CD4-positive, alpha-beta memory T cell (primary cell): ENCODE measurements at regions of chr17 and their contacts with region 1.

Region 1: GRCh38 chr17:51435641-51436091 is 175.3 kb downstream of the UTP18 start:
- DNase-seq: peak; percentile 29 to 74 (median 40)
- H3K4me3 ChIP-seq: peak overlapping the region in 1 of 2 donors; percentile 20
- H3K4me3 Mint-ChIP-seq: peak overlapping the region; percentile 33 to 87 (median 75)
- H3K27ac ChIP-seq: peak overlapping the region; percentile 15
- H3K27ac Mint-ChIP-seq: peak overlapping the region; percentile 54 to 93 (median 74)
- H3K4me1 ChIP-seq: peaks cover 60% of the 10 kb centered on the region
- H3K4me1 Mint-ChIP-seq: peaks cover 27 to 67% (median 45%) of the 10 kb centered on the region in 4 donors
- H3K27me3 ChIP-seq: no peaks in the 10 kb centered on the region
- H3K27me3 Mint-ChIP-seq: no peaks in the 10 kb centered on the region

Region 2: DNA sequence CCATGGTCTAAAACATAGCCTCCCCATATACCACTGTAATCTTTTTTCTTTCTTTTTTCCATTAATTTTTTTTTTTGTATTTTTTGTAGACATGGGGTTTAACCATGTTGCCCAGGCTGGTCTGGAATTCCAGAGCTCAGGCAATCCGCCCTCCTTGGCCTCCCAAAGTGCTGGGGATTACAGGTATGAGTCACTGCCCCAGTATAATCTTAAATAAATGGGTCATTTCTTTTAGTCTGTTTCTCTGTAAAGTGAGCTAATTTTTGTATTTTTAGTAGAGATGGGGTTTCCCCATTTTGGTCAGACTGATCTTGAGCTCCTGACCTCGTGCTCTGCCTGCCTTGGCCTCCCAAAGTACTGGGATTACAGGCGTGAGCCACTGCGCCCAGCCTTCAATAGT is 288.0 kb before region 1 on chr17:
- CTCF ChIA-PET with region 1: no interaction called
- POLR2A ChIA-PET with region 1: no interaction called
- intact Hi-C with region 1: no loop called
- DNase-seq: no peak
- H3K4me3 ChIP-seq: no peak overlapping the region
- H3K4me3 Mint-ChIP-seq: no peak overlapping the region
- H3K27ac ChIP-seq: no peak overlapping the region
- H3K27ac Mint-ChIP-seq: peak overlapping the region in 1 of 7 donors; percentile 23
- H3K4me1 ChIP-seq: peaks cover 3% of the 10 kb centered on the region
- H3K4me1 Mint-ChIP-seq: peaks cover 0 to 2% (median 0%) of the 10 kb centered on the region in 4 donors
- H3K27me3 ChIP-seq: no peaks in the 10 kb centered on the region
- H3K27me3 Mint-ChIP-seq: peaks cover 0 to 1% of the 10 kb centered on the region in 2 donors

Region 3: DNA sequence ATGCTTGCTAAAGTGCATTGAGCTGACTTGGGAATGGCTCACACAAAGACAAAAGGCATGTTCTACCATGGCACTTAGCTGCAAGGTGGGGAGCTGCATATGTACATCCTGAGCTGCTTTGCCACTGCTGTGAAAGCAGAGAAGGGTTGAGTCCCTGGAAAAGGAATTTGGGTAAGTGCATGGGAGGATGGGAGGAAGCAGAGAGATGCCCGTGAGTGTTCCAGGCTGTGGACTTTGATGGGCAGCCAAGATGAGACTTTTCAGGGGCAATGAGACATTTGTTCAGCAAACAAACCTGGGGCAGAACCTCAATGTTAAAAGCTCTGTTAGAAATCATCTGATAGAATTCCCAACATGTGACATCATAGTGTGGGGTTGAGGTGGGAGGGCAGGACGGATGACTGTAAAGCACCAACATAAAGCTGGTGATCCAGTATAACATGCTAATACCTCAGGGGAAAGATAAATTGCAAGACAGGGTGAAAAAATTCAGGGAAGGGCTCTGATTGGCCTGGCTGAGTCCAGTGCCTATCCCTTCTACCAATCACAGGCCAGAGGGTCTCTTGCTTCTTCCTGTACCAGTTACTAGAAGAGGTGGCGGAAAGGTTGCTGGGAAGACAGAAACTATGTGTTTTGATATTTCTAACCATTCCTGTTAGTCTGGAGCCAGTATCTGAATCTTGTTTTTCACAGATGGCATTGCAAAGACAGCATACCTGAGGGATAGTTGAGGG is 12.1 kb before region 1 on chr17:
- CTCF ChIA-PET with region 1: interaction called, 13 read pairs
- POLR2A ChIA-PET with region 1: interaction called, 3 read pairs
- intact Hi-C with region 1: no loop called
- DNase-seq: no peak
- H3K4me3 ChIP-seq: no peak overlapping the region
- H3K4me3 Mint-ChIP-seq: no peak overlapping the region
- H3K27ac ChIP-seq: no peak overlapping the region
- H3K27ac Mint-ChIP-seq: peak overlapping the region in 2 of 7 donors; percentile 9 to 36
- H3K4me1 ChIP-seq: peaks cover 26% of the 10 kb centered on the region
- H3K4me1 Mint-ChIP-seq: peaks cover 26 to 31% (median 30%) of the 10 kb centered on the region in 4 donors
- H3K27me3 ChIP-seq: no peaks in the 10 kb centered on the region
- H3K27me3 Mint-ChIP-seq: no peaks in the 10 kb centered on the region

Region 4: GRCh38 chr17:51461578-51462004 is 25.9 kb after region 1 on chr17:
- CTCF ChIA-PET with region 1: interaction called, 13 read pairs
- POLR2A ChIA-PET with region 1: no interaction called
- intact Hi-C with region 1: no loop called
- DNase-seq: peak; percentile 29 to 56 (median 36)
- H3K4me3 ChIP-seq: no peak overlapping the region
- H3K4me3 Mint-ChIP-seq: no peak overlapping the region
- H3K27ac ChIP-seq: no peak overlapping the region
- H3K27ac Mint-ChIP-seq: no peak overlapping the region
- H3K4me1 ChIP-seq: no peaks in the 10 kb centered on the region
- H3K4me1 Mint-ChIP-seq: no peaks in the 10 kb centered on the region
- H3K27me3 ChIP-seq: no peaks in the 10 kb centered on the region
- H3K27me3 Mint-ChIP-seq: peaks cover 2 to 3% of the 10 kb centered on the region in 2 donors

Region 5: GRCh38 chr17:51540151-51540550 is 104.5 kb after region 1 on chr17:
- CTCF ChIA-PET with region 1: no interaction called
- POLR2A ChIA-PET with region 1: no interaction called
- intact Hi-C with region 1: loop called (anchors 1 kb)
- DNase-seq: peak in 2 of 5 donors; percentile 3 to 8
- H3K4me3 ChIP-seq: no peak overlapping the region
- H3K4me3 Mint-ChIP-seq: no peak overlapping the region
- H3K27ac ChIP-seq: no peak overlapping the region
- H3K27ac Mint-ChIP-seq: no peak overlapping the region
- H3K4me1 ChIP-seq: peaks cover 8% of the 10 kb centered on the region
- H3K4me1 Mint-ChIP-seq: peaks cover 6 to 12% (median 9%) of the 10 kb centered on the region in 4 donors
- H3K27me3 ChIP-seq: no peaks in the 10 kb centered on the region
- H3K27me3 Mint-ChIP-seq: peaks cover 0 to 3% of the 10 kb centered on the region in 2 donors